Dorsolateral prefrontal cortex (tissue), 120 donors: ENCODE measurements at regions of chr13 and their contacts with region 1.

Region 1: DNA sequence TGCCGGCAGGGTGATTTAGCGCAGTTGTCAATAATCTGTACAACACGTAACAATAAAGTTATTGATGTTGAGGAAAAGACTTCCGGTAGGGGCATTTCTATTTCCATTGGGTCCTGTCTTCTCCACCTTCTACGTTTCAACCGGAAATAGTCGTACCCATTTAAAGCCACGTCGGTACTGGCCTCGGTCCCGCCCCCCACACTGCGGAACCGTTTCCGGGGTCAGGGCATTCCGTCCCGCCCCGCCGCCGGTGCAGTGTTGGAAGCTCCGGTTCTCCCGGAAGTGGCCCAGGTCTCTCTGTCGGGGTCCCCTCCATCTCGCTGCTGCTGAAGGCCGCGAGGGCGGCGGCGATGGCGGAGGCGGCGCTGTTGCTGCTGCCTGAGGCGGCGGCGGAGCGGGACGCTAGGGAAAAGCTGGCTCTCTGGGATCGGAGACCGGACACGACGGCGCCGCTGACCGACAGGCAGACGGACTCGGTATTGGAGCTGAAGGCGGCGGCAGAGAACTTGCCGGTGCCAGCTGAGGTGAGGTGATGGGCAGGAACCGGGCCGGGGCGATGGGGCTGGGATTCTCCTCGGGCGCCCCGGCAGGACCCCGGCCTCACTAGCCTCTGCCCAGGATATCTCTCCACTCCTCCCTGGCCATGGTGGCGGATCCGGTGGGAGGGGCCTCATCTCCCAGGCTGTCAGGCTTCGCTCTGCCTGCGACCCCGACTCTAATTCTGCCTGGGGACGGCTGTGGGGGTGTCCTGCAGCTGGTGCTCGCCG is at the start of gene COG3:
- DNase-seq: peak; percentile 91 to 97 (median 95)
- H3K4me3 ChIP-seq: peak within 1 kb of the TSS; percentile 50 to 100 (median 95)
- H3K27ac ChIP-seq: peak within 1 kb of the TSS; percentile 16 to 97 (median 83)
- H3K27me3 ChIP-seq: peaks cover 0 to 12% (median 0%) of the 10 kb centered on the region in 45 donors
- CTCF ChIP-seq: peak in 42 of 56 donors; percentile 7 to 56 (median 34)
- total RNA-seq, gene COG3: 17.6 to 36.0 (median 27.1) TPM

Region 2: DNA sequence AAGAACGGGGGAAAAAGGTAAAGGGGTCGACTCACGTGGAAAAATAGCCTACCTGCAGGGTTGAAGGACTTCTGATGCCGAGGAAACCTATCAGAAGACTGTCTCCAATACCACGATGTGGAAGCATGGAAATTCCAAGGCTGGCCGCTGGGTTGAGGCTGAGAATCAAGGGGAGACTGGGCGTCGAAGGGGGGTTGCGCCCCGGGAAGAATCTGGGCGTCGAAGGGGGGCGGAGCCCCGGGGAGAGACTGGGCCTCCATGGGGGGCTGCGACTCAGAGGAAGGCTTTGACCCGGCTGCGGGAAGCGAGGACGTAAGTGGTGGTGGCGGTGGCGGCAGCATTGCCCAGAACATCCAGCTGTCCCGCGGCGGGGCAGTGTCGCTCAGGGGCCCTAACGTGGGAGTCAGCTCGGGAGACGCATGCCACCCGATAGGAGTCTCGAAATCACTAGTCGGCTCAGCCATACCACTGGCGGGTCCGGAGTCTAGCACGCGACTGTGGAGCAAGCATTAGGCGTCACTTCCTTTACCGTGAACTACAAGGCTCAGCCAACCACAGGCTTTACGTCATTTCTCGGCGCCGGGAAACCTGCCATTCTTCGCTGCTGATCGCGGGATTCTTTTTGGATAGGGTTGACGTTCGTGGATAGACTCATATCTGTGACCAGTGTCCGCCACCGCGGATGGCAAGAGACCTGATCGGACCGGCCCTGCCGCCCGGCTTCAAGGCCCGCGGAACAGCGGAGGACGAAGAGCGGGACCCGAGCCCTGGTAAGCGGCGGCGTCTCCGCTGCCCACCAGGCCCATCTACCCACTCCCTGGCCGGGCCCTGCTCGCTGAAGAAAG is 475.7 kb before region 1 on chr13 and contains the starts of genes GPALPP1 and NUFIP1:
- intact Hi-C with region 1: loop called in 1 of 2 experiments (anchors 5 kb)
- DNase-seq: peak; percentile 92 to 98 (median 96)
- H3K4me3 ChIP-seq: peak within 1 kb of the TSS; percentile 75 to 100 (median 98)
- H3K27ac ChIP-seq: peak within 1 kb of the TSS in 55 of 59 donors; percentile 15 to 96 (median 79)
- H3K27me3 ChIP-seq: no peaks in the 10 kb centered on the region
- CTCF ChIP-seq: peak in 33 of 56 donors; percentile 7 to 49 (median 26)
- total RNA-seq, gene GPALPP1: 33.6 to 63.8 (median 48.2) TPM
- total RNA-seq, gene NUFIP1: 3.6 to 10.1 (median 6.9) TPM

Region 3: GRCh38 chr13:45269204-45269603 is 195.7 kb before region 1 on chr13:
- intact Hi-C with region 1: no loop called
- DNase-seq: no peak
- H3K4me3 ChIP-seq: no peak overlapping the region
- H3K27ac ChIP-seq: no peak overlapping the region
- H3K27me3 ChIP-seq: no peaks in the 10 kb centered on the region
- CTCF ChIP-seq: no peak

Region 4: DNA sequence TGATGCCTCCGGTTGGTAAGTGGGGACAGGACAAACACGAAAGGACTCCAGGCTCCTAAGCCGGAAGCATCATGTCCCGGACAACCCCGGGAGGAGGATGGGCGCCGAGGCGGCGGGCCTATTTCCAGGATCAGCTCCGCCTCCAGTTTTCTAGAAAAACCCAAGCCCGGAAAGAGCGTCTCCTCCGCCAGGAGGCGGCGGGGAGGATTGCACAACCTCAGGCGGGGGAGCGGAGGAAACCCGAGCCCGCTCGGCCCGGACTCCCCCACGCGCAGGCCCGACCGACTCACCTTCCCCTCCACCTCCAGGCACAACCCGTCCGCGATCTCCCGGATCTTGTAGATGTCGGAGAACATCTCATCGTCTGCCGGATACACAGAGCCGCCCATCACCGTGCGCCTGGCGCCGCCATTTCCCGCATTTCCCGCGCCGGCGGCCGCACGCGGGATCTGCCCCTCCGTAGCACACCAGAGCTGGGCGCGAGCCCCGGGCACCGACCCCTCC is 124.4 kb before region 1 on chr13:
- intact Hi-C with region 1: loop called (anchors 2 to 10 kb)
- DNase-seq: peak; percentile 72 to 90 (median 85)
- H3K4me3 ChIP-seq: peak overlapping the region; percentile 58 to 100 (median 95)
- H3K27ac ChIP-seq: peak overlapping the region; percentile 92 to 100 (median 100)
- H3K27me3 ChIP-seq: no peaks in the 10 kb centered on the region
- CTCF ChIP-seq: peak in 54 of 56 donors; percentile 26 to 69 (median 51)

Region 5: DNA sequence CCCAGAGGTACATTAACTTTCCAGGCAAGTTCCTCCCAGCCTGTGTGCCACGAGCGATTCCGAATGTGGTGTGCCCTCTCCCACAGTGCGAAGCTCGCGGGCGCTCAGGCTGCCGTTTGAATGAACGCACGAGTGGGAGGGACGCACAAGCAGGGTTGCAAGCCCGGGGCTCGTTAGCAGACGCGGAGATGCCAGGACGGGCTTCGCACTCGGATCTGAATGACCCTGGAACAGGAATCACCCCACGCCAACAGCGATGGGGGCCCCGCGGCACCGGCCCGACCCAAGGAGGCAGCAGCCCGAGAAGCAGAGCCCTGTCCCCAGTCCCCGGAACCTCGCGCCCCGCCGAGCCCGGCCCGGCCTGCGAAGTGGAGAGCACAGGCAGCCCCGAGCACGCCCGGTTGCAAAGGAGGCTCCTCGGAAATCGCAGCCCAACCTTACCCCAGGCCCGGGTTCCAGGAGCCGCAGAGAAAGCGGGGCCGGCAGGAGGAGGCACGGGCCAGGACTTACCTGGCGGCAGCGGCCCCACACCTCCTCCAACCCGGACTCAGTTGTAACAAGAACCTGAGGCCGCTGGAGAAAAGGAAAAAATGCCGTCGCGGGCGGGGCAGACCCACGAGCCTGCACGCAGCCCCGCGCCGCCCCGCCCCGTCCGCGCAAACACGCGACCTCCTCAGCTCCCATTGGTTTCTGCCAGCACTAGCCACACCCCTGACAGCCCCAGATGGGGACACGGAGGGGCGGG is 46.9 kb before region 1 on chr13 and contains the start of gene SLC25A30:
- intact Hi-C with region 1: loop called in 1 of 2 experiments (anchors 1 kb)
- DNase-seq: peak; percentile 72 to 95 (median 90)
- H3K4me3 ChIP-seq: peak within 1 kb of the TSS; percentile 65 to 94 (median 81)
- H3K27ac ChIP-seq: peak within 1 kb of the TSS in 57 of 59 donors; percentile 23 to 93 (median 76)
- H3K27me3 ChIP-seq: no peaks in the 10 kb centered on the region
- CTCF ChIP-seq: peak in 1 of 56 donors; percentile 4
- total RNA-seq, gene SLC25A30: 7.9 to 24.9 (median 13.0) TPM

Region 6: GRCh38 chr13:45807520-45808099 is 342.7 kb after region 1 on chr13:
- intact Hi-C with region 1: no loop called
- DNase-seq: peak in 3 of 10 donors; percentile 21 to 60 (median 57)
- H3K4me3 ChIP-seq: no peak overlapping the region
- H3K27ac ChIP-seq: no peak overlapping the region
- H3K27me3 ChIP-seq: no peaks in the 10 kb centered on the region
- CTCF ChIP-seq: peak; percentile 17 to 83 (median 66)